ENCODE measurements at regions of chr2 and their contacts with region 1.

Region 1: GRCh38 chr2:95050427-95050861 is 24.9 kb downstream of the MAL start:
- DNase-seq: no peak
- H3K4me3 Mint-ChIP-seq: no peak overlapping the region
- H3K27ac Mint-ChIP-seq: peak overlapping the region; percentile 90
- H3K4me1 Mint-ChIP-seq: peaks cover 47% of the 10 kb centered on the region
- H3K27me3 Mint-ChIP-seq: no peaks in the 10 kb centered on the region

Region 2: DNA sequence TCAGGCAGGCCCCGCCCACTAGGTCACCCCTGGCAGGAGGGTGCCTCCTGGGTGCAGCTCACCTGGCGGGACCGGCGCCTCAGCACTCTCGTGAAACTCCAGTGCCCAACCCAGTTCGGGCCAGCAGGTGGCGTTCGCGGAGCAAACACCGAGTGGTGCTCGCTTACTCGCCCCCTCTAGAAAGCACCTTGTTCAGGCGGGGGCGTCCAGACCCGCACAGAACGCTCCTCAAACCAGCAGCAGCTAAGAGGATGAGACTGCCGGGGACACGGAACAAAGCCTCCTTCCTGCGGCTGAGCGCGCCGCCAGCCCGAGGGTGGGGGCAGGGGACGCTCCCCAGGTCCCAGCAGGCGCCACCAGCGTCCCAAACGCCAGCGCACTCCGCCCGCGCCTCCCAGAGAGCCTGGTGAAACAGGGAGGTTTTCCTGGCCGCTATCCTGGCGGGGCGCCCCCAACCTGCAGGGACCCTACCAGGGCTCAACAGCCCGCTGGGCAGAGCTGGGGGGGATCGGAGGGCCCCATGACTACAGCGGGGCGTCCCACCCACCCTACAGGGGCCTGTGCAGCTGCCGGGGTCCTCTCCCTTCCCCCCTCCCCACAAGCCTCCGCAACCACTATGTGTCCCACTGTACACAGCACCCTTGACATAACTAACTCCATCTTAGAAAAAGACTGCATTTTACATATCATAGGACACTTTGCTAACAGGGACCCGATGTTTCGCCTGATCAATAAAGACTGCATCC is 26.5 kb after region 1 on chr2:
- intact Hi-C with region 1: loop called (anchors 1 kb)
- DNase-seq: peak; percentile 86
- H3K4me3 Mint-ChIP-seq: peak overlapping the region; percentile 87
- H3K27ac Mint-ChIP-seq: peak overlapping the region; percentile 95
- H3K4me1 Mint-ChIP-seq: peaks cover 70% of the 10 kb centered on the region
- H3K27me3 Mint-ChIP-seq: no peaks in the 10 kb centered on the region